ENCODE measurements at regions of chr12 and their contacts with region 1.

Region 1: DNA sequence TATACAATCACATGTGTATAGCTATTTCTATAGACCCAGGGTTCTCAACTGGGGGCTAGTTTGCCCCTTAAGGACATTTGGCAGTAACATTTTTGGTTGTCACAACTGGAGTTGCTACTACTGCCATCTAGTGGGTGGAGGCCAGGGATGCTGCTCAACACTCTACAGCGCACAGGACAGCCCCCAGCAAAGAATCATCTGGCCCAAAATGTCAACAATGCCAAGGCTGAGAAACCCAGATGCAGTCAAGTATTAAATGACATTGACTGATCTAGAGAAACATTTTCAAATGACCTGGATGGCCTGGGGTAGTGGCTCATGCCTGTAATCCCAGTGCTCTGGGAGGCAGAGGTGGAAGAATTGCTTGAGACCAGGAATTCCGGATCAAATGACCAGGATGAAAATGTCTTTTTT is 5.8 kb downstream of the WSB2 start:
- DNase-seq: peak; percentile 43 to 81 (median 51)
- H3K4me3 ChIP-seq: no peak overlapping the region
- H3K4me3 Mint-ChIP-seq: peak overlapping the region in 2 of 7 donors; percentile 5 to 34
- H3K27ac ChIP-seq: no peak overlapping the region
- H3K27ac Mint-ChIP-seq: peak overlapping the region; percentile 58 to 98 (median 81)
- H3K4me1 ChIP-seq: peaks cover 17% of the 10 kb centered on the region
- H3K4me1 Mint-ChIP-seq: peaks cover 51 to 67% (median 62%) of the 10 kb centered on the region in 3 donors
- H3K27me3 ChIP-seq: no peaks in the 10 kb centered on the region
- H3K27me3 Mint-ChIP-seq: peaks cover 0 to 2% of the 10 kb centered on the region in 2 donors

Region 2: DNA sequence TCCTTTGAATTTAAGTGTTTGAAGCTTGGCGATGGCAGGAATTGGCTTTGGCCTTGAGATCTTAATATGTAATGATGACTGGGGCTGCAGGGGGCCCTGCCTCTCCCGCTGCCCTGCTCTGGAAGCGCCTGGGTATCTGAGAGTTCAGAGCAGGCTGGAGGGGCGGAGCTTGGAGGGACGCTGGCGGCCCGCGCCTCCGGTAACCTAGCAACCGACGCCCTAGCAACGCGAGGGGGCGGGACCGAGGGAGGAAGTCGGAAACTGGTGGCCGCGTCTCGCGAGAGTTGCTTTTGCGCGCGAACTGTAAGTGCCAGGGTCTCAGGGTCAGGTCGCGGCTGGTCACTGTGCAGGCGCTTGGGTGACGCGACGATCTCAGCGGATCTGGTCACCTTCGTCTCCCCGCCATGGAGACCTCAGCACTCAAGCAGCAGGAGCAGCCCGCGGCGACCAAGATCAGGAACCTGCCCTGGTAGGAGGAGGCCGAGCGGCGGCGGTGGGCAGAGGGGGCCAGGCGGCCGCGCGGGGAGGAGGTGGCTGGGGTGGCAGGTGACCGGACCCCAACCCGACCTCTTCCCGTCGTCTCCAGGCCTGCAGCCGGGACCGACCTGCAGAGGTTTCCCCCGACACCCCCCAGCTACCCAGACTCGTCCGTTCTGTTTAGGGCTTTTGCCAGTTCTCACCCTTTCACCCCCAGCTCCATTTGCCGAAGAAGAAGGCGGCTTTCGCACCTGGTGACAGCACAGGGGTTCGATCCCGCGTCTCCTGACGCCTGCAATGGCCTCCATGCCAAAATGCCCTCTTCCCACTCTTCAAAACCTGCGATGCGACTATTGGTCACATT is 38.5 kb before region 1 on chr12 and contains the start of gene RFC5:
- CTCF ChIA-PET with region 1: interaction called, 3 read pairs
- POLR2A ChIA-PET with region 1: interaction called, 12 read pairs
- DNase-seq: peak; percentile 95 to 98 (median 98)
- H3K4me3 ChIP-seq: peak within 1 kb of the TSS; percentile 92
- H3K4me3 Mint-ChIP-seq: peak within 1 kb of the TSS; percentile 85 to 97 (median 91)
- H3K27ac ChIP-seq: peak within 1 kb of the TSS; percentile 66
- H3K27ac Mint-ChIP-seq: peak within 1 kb of the TSS; percentile 60 to 98 (median 83)
- H3K4me1 ChIP-seq: peaks cover 10% of the 10 kb centered on the region
- H3K4me1 Mint-ChIP-seq: peaks cover 16 to 22% (median 17%) of the 10 kb centered on the region in 3 donors
- H3K27me3 ChIP-seq: no peaks in the 10 kb centered on the region
- H3K27me3 Mint-ChIP-seq: peaks cover 0 to 3% of the 10 kb centered on the region in 2 donors
- total RNA-seq, gene RFC5: 66.1 to 67.4 TPM

Region 3: GRCh38 chr12:118073768-118074167 is 18.6 kb after region 1 on chr12:
- CTCF ChIA-PET with region 1: interaction called, 4 read pairs
- POLR2A ChIA-PET with region 1: interaction called, 12 read pairs
- DNase-seq: no peak
- H3K4me3 ChIP-seq: no peak overlapping the region
- H3K4me3 Mint-ChIP-seq: no peak overlapping the region
- H3K27ac ChIP-seq: no peak overlapping the region
- H3K27ac Mint-ChIP-seq: peak overlapping the region in 1 of 8 donors; percentile 40
- H3K4me1 ChIP-seq: no peaks in the 10 kb centered on the region
- H3K4me1 Mint-ChIP-seq: no peaks in the 10 kb centered on the region
- H3K27me3 ChIP-seq: no peaks in the 10 kb centered on the region
- H3K27me3 Mint-ChIP-seq: peaks cover 0 to 14% of the 10 kb centered on the region in 2 donors